Activated CD4-positive, alpha-beta T cell treated with anti-CD3 and anti-CD28 coated beads, Interleukin-2, amount 10 ng/mL, durations not matched to agents 24 days and 14 days (primary cell): ENCODE measurements at regions of chr3 and their contacts with region 1.

Region 1: DNA sequence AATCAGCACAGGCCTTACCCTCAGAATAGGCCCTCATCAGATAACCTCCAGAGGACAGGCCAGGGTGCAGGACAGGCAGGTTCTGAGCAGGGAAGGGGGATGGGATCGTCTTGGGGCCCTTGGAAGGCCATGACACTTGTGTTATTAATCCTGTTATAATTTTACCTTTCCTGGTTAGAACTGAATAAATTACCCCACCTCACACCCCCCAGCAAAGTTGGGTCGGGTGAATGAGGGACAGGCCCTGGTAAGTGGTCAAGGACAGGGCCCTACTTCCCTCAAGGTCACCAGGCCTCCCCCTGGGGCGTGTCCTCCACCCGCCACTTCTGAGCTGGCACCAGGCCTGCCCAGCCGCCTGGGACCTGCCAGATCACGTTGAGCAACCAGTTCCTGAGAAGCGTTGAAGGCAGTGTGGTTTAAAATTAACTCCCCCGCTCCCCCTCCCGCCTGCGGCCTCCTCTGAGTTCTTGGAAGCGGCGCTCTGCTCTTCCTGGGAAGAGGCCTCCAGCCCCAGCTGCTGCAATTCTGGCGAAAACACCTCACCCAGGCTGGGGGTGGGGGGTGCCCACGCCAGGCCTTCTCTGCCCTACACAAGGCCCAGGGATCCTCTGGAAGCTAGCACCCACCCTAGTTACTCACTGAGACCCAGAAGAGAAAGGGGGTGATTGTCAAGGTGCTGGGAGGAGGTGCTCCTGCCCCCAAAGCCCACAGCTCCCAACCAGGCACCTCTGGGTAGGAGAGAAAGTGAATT is 10.6 kb downstream of the CISH start:
- DNase-seq: peak; percentile 95
- H3K4me3 Mint-ChIP-seq: peak overlapping the region; percentile 93
- H3K27ac Mint-ChIP-seq: peak overlapping the region; percentile 98
- H3K4me1 Mint-ChIP-seq: peaks cover 74% of the 10 kb centered on the region
- H3K27me3 Mint-ChIP-seq: no peaks in the 10 kb centered on the region

Region 2: DNA sequence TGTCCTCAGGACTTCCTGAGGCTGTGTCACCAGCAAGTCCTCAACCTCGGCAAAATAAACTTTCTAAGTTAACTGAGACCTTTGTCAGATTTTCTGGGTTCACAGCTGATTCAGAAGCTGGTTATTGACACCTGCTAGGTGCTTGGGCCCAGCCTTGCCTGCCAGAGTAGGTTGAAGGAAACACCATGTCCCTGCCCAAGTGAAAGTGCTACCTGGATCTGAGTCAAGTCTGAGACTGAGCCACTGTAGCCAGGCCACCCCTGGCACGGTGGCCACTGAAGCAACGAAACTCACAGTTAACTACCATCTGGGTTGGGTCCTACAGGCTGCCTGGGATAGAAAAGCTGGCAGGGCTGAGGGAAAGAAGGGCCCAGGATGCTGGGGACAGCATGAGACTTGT is 286.7 kb before region 1 on chr3:
- intact Hi-C with region 1: no loop called
- DNase-seq: no peak
- H3K4me3 Mint-ChIP-seq: no peak overlapping the region
- H3K27ac Mint-ChIP-seq: peak overlapping the region; percentile 72
- H3K4me1 Mint-ChIP-seq: peaks cover 20% of the 10 kb centered on the region
- H3K27me3 Mint-ChIP-seq: no peaks in the 10 kb centered on the region

Region 3: DNA sequence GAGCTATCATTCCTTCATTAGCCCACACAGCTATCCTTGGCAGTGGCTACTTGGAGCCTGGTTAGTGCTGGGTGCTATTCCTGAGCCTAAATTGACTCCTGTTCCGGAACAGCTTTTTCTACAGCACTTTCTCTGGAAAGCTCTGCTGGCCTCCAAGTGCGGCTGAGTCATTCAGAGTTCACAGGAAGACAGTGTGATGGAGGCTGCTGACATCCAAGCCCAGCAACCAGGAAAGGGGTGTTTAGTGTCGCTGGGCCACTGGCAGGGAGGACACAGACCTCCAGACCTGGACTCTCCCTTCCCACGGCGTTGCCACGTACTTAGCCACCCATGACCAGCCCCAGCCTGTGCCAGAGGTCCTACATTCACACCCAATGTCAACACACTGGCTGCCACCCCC is 126.3 kb before region 1 on chr3:
- intact Hi-C with region 1: no loop called
- DNase-seq: no peak
- H3K4me3 Mint-ChIP-seq: no peak overlapping the region
- H3K27ac Mint-ChIP-seq: no peak overlapping the region
- H3K4me1 Mint-ChIP-seq: peaks cover 6% of the 10 kb centered on the region
- H3K27me3 Mint-ChIP-seq: peaks cover 3% of the 10 kb centered on the region

Region 4: GRCh38 chr3:50587806-50588758 is 12.9 kb before region 1 on chr3:
- intact Hi-C with region 1: loop called (anchors 1 kb)
- DNase-seq: peak; percentile 89
- H3K4me3 Mint-ChIP-seq: peak overlapping the region; percentile 72
- H3K27ac Mint-ChIP-seq: peak overlapping the region; percentile 95
- H3K4me1 Mint-ChIP-seq: peaks cover 79% of the 10 kb centered on the region
- H3K27me3 Mint-ChIP-seq: no peaks in the 10 kb centered on the region